ENCODE measurements at regions of chr18 and their contacts with region 1.

Region 1: GRCh38 chr18:74147779-74148542 is at the starts of genes FBXO15 and TIMM21:
- DNase-seq: peak; percentile 94 to 97 (median 96)
- H3K4me3 ChIP-seq: peak within 1 kb of the TSS; percentile 97 to 99
- H3K4me3 Mint-ChIP-seq: peak within 1 kb of the TSS; percentile 94 to 98 (median 95)
- H3K27ac ChIP-seq: peak within 1 kb of the TSS; percentile 92
- H3K27ac Mint-ChIP-seq: peak within 1 kb of the TSS; percentile 98 to 99 (median 99)
- H3K4me1 ChIP-seq: peaks cover 29% of the 10 kb centered on the region
- H3K4me1 Mint-ChIP-seq: peaks cover 27 to 55% (median 40%) of the 10 kb centered on the region in 4 donors
- H3K27me3 ChIP-seq: no peaks in the 10 kb centered on the region
- H3K27me3 Mint-ChIP-seq: no peaks in the 10 kb centered on the region
- total RNA-seq, gene FBXO15: 2.5 to 2.6 TPM
- total RNA-seq, gene TIMM21: 23.6 to 24.2 TPM

Region 2: DNA sequence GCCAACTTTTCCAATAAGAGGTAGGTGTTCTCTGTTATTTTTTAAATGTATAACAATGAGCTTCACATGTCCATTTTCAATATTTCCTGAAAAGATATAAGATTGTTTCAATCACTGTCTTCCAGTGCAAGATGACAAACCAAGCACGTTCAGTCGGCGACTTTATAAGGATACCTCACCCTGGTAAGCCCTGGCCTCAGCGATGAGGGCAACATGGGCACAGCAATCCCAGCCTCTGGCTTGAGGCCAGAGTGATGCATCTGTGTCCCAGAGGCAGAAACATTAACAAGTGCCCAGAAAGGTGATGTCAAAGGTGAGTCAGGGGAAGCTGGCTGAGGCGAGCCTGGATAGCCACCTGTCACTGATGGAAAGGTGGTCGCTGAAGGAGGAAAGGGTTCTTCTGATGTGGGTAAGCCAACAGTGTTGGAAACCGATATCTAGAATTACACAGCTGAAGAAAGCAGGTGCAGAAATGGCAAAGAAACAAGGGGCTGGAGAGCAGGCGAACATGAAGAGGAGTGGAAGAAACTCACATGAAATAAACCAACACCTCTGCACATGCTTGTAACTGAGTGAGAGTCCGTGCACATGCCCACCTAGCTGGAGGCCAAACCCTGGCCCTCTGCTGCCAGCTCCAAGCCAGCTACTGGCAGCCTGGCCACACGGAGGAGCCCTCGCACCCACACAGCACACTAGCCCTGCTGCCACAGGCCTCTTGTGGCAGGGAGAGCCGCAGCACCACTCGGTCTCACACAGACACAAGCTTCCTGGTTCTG is 65.8 kb before region 1 on chr18:
- CTCF ChIA-PET with region 1: interaction called, 8 read pairs
- POLR2A ChIA-PET with region 1: no interaction called
- intact Hi-C with region 1: loop called (anchors 5 kb)
- DNase-seq: peak; percentile 45 to 59 (median 59)
- H3K4me3 ChIP-seq: peak overlapping the region in 1 of 2 donors; percentile 15
- H3K4me3 Mint-ChIP-seq: peak overlapping the region; percentile 78 to 90 (median 84)
- H3K27ac ChIP-seq: peak overlapping the region; percentile 6
- H3K27ac Mint-ChIP-seq: peak overlapping the region; percentile 64 to 98 (median 90)
- H3K4me1 ChIP-seq: peaks cover 10% of the 10 kb centered on the region
- H3K4me1 Mint-ChIP-seq: peaks cover 10 to 16% (median 13%) of the 10 kb centered on the region in 4 donors
- H3K27me3 ChIP-seq: no peaks in the 10 kb centered on the region
- H3K27me3 Mint-ChIP-seq: no peaks in the 10 kb centered on the region

Region 3: DNA sequence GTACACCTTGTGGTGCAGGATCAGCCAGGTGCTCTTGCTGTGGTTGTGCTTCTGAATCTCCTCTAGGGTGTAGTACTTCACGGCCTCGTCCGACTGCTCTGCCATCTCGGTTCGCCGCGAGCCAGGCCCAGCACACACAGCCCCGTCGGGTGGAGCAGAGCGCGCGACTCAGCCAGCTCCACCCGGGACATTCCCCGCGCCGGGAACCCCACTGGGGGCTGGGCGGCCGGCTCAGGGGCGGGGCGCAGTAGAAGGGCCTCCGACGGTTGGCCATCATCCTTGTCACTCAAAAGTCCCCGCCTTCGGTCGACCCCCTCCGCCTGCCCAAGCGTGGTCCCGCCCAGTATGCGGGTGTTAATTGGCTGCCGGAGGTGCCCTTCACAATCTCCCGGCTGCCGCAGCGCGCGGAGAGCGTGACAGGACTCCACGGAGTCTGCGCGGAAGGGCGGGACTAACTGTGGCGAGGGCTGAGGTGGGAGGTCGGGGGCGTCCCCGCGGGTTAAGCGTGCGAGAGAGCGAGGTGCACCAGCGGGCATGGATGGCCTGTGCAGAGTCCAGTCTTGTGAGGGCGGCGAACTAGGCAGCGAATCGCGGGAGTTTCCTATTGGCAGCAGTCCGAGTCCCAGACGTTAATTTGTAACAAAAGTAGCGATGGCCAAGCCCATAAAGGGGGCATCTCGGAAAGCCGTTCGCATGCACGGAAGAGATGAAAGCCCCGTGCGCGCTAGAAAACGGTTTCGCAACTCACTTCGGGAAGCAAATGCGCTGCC is 144.0 kb after region 1 on chr18 and contains the start of gene CYB5A:
- CTCF ChIA-PET with region 1: no interaction called
- POLR2A ChIA-PET with region 1: no interaction called
- intact Hi-C with region 1: loop called (anchors 1 kb)
- DNase-seq: peak; percentile 97 to 99 (median 98)
- H3K4me3 ChIP-seq: peak within 1 kb of the TSS; percentile 90 to 98
- H3K4me3 Mint-ChIP-seq: peak within 1 kb of the TSS in 3 of 8 donors; percentile 95 to 99 (median 96)
- H3K27ac ChIP-seq: peak within 1 kb of the TSS; percentile 74
- H3K27ac Mint-ChIP-seq: peak within 1 kb of the TSS; percentile 65 to 98 (median 88)
- H3K4me1 ChIP-seq: peaks cover 13% of the 10 kb centered on the region
- H3K4me1 Mint-ChIP-seq: peaks cover 6 to 20% (median 11%) of the 10 kb centered on the region in 4 donors
- H3K27me3 ChIP-seq: no peaks in the 10 kb centered on the region
- H3K27me3 Mint-ChIP-seq: no peaks in the 10 kb centered on the region
- total RNA-seq, gene CYB5A: 22.8 to 27.0 TPM

Region 4: GRCh38 chr18:74353169-74353775 is 205.3 kb after region 1 on chr18:
- CTCF ChIA-PET with region 1: no interaction called
- POLR2A ChIA-PET with region 1: no interaction called
- intact Hi-C with region 1: no loop called
- DNase-seq: peak; percentile 66 to 69 (median 67)
- H3K4me3 ChIP-seq: no peak overlapping the region
- H3K4me3 Mint-ChIP-seq: no peak overlapping the region
- H3K27ac ChIP-seq: no peak overlapping the region
- H3K27ac Mint-ChIP-seq: peak overlapping the region in 2 of 7 donors; percentile 11 to 58
- H3K4me1 ChIP-seq: peaks cover 9% of the 10 kb centered on the region
- H3K4me1 Mint-ChIP-seq: peaks cover 0 to 7% (median 5%) of the 10 kb centered on the region in 4 donors
- H3K27me3 ChIP-seq: no peaks in the 10 kb centered on the region
- H3K27me3 Mint-ChIP-seq: peaks cover 0 to 9% of the 10 kb centered on the region in 2 donors

Region 5: DNA sequence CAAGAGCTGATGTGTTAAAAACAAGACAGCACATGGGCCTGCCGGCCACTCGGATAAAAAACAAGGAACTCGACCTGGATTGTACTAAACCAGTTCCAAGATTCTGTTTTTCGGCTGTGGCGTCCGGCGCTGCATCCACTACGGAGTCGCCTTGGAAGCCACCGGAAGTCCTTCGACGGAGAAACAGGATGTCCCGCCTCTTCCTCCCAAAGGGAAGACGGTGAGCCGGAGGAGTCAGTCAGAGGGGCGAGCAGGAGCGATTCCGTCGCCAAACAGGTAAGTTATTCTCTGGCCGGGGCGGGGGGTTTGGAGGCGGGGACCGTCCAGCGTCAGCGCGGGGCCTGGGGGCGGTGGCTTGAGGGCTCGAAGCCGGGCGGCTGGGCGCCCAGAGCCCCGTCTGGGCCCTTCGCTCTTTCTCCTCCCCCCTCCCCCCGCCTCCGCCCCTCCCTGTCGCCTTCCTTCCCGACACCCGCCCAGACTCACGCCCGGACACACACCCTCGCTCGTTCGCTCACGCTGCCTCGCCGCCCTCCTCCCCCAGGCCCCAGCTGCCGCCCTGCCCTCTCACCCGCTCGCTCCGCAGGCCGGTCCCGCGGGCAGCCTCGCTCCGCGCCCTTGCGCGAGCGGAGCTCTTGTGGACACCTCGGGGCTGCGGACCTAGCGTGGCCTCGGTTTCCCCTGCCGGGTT is 449.8 kb after region 1 on chr18 and contains the start of gene ZNF407:
- CTCF ChIA-PET with region 1: no interaction called
- POLR2A ChIA-PET with region 1: interaction called, 4 read pairs
- intact Hi-C with region 1: loop called (anchors 1 kb)
- DNase-seq: peak; percentile 89 to 94 (median 92)
- H3K4me3 ChIP-seq: peak within 1 kb of the TSS; percentile 98 to 99
- H3K4me3 Mint-ChIP-seq: peak within 1 kb of the TSS; percentile 94 to 99 (median 96)
- H3K27ac ChIP-seq: peak within 1 kb of the TSS; percentile 93
- H3K27ac Mint-ChIP-seq: peak within 1 kb of the TSS; percentile 98 to 99 (median 99)
- H3K4me1 ChIP-seq: peaks cover 42% of the 10 kb centered on the region
- H3K4me1 Mint-ChIP-seq: peaks cover 35 to 71% (median 46%) of the 10 kb centered on the region in 4 donors
- H3K27me3 ChIP-seq: no peaks in the 10 kb centered on the region
- H3K27me3 Mint-ChIP-seq: no peaks in the 10 kb centered on the region
- total RNA-seq, gene ZNF407: 25.8 to 26.9 TPM

Region 6: GRCh38 chr18:75209129-75209950 is 1061.4 kb after region 1 on chr18 and contains the start of gene PTGR3:
- CTCF ChIA-PET with region 1: no interaction called
- POLR2A ChIA-PET with region 1: no interaction called
- intact Hi-C with region 1: loop called (anchors 1 kb)
- DNase-seq: peak; percentile 78 to 89 (median 80)
- H3K4me3 ChIP-seq: peak within 1 kb of the TSS; percentile 91 to 96
- H3K4me3 Mint-ChIP-seq: peak within 1 kb of the TSS; percentile 96 to 100 (median 100)
- H3K27ac ChIP-seq: peak within 1 kb of the TSS; percentile 80
- H3K27ac Mint-ChIP-seq: peak within 1 kb of the TSS; percentile 93 to 99 (median 97)
- H3K4me1 ChIP-seq: peaks cover 62% of the 10 kb centered on the region
- H3K4me1 Mint-ChIP-seq: peaks cover 46 to 73% (median 56%) of the 10 kb centered on the region in 4 donors
- H3K27me3 ChIP-seq: no peaks in the 10 kb centered on the region
- H3K27me3 Mint-ChIP-seq: peaks cover 0 to 2% of the 10 kb centered on the region in 2 donors
- total RNA-seq, gene PTGR3: 55.9 to 56.7 TPM

Measured in CD4-positive, alpha-beta memory T cell (primary cell).